ENCODE measurements at regions of chr16 and their contacts with region 1.

Region 1: DNA sequence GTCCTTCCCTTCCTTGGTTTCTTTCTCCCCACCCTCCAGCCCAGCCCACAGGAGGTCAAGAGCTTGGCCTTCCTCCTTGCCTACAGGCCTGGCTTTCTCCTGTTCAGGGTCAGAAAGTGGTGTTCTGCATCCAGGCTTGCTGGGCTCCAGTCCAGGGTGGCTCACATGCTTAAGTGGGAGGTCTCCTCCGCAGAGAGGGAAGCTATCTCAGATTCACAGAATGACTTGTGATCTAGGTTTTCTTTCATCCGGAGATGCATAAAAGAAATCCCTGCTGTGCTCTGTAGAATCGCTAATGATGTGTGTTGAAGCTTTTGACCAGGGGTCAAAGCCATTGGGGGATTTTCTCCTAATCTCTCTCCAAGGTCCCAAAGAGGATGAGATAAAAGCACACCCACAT is 382.3 kb upstream of the EEF2KMT start:
- DNase-seq: no peak

Region 2: DNA sequence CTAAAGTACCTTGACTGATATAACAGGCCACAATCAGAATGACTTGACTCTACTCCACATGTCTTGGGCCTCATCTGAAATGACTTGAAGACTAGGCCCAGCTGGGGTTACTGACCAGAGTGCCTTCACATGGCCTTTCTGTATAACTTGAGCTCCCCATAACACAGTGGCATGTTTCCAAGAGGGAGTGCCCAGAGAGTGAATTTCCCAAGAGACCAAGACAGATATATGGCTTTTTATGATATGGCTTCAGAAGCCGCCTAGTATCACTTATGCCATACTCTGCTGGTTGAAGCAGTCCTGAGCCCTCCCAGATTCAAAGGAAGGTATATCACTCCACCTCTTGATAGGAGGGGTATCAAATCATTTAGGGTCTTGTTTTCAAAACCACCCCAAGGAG is 24.8 kb before region 1 on chr16:
- intact Hi-C with region 1: loop called in 1 of 2 experiments (anchors 1 kb)
- DNase-seq: no peak

Region 3: DNA sequence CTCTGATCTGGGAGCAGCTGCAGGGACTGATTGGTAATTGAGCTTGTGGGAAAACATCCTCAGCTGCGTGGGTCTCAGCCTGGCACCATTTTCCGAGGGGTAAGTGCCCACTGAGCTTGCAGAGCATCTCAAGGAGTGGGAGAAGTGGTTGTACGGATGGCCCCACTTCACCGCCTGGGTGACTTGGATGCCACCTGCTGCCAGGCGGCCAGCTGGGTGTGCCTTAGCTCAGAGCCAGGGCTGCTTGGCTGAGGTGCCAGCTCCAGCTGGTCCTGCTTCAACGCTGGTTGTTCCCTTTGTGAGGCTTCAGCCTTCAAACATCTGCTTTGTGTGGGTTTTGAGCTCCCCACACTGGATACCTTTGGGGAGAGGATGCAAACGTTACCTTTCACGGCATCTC is 100.4 kb after region 1 on chr16:
- intact Hi-C with region 1: no loop called
- DNase-seq: no peak

Region 4: DNA sequence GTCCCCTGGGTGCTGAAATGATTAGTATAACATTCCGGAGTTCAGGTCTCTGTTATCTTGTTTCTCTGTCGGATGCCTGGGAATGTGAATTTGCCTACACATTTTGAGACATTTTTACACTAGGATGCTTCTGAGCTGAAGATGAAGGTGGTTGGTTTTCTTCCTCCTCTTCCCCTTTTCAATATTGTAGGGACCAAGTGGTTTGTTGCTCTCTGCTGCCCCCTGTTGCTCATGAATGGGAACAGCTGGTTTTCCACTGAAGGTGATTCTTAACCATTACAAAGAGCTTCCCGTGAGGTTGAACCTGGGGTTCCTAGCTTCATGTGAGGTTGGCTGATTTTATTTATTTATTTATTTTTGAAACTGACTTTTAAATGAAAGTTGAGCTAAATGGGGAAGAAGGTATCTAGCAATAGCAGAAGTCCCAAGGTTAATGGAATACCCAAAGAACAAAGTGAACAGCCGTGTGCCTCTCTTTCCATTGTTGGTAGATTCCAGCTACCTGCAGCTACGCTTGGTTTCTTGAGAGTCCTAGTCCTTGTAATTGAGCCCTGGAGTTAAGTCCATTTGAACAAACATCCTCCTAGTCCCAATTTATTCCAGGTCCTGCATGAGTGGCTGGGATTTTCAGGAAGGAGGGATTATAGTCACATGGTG is 601.5 kb after region 1 on chr16:
- intact Hi-C with region 1: loop called in 1 of 2 experiments (anchors 5 kb)
- DNase-seq: no peak

Measured in posterior vena cava (tissue), 2 donors.